ENCODE measurements at regions of chr20 and their contacts with region 1.

Region 1: GRCh38 chr20:60869087-60869486 is 383.0 kb upstream of the CDH4 start:
- DNase-seq: no peak
- H3K4me3 ChIP-seq: no peak overlapping the region
- H3K27ac ChIP-seq: no peak overlapping the region
- H3K4me1 ChIP-seq: no peaks in the 10 kb centered on the region
- H3K27me3 ChIP-seq: no peaks in the 10 kb centered on the region
- CTCF ChIP-seq: no peak
- EP300 ChIP-seq: no peak
- POLR2A ChIP-seq: no peak

Region 2: GRCh38 chr20:59735917-59736316 is 1133.2 kb before region 1 on chr20:
- in situ Hi-C with region 1: no loop called
- intact Hi-C with region 1: no loop called
- DNase-seq: no peak
- H3K4me3 ChIP-seq: no peak overlapping the region
- H3K27ac ChIP-seq: no peak overlapping the region
- H3K4me1 ChIP-seq: no peaks in the 10 kb centered on the region
- H3K27me3 ChIP-seq: no peaks in the 10 kb centered on the region
- CTCF ChIP-seq: no peak
- EP300 ChIP-seq: no peak
- POLR2A ChIP-seq: no peak

Region 3: DNA sequence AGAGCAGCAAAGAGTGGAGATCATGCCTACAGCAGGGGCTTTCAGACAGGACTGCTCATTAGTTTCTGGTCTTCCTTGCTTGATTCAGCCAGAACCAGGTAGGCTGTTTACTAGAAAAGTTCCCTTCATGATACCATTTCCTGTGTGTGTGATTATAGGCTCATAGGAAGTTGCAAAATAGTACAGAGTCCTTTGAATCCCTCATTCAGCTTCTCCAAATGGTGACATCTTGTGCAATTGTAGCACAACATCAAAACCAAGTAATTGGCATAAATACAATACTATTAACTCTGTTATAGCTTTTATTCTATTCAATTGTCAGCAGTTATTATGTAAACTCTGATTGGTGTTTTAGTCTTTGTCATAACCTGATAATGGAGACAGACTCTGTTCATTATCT is 35.6 kb after region 1 on chr20:
- in situ Hi-C with region 1: no loop called
- intact Hi-C with region 1: loop called (anchors 1 kb)
- DNase-seq: no peak
- H3K4me3 ChIP-seq: no peak overlapping the region
- H3K27ac ChIP-seq: no peak overlapping the region
- H3K4me1 ChIP-seq: no peaks in the 10 kb centered on the region
- H3K27me3 ChIP-seq: no peaks in the 10 kb centered on the region
- CTCF ChIP-seq: no peak
- EP300 ChIP-seq: no peak
- POLR2A ChIP-seq: no peak

Region 4: DNA sequence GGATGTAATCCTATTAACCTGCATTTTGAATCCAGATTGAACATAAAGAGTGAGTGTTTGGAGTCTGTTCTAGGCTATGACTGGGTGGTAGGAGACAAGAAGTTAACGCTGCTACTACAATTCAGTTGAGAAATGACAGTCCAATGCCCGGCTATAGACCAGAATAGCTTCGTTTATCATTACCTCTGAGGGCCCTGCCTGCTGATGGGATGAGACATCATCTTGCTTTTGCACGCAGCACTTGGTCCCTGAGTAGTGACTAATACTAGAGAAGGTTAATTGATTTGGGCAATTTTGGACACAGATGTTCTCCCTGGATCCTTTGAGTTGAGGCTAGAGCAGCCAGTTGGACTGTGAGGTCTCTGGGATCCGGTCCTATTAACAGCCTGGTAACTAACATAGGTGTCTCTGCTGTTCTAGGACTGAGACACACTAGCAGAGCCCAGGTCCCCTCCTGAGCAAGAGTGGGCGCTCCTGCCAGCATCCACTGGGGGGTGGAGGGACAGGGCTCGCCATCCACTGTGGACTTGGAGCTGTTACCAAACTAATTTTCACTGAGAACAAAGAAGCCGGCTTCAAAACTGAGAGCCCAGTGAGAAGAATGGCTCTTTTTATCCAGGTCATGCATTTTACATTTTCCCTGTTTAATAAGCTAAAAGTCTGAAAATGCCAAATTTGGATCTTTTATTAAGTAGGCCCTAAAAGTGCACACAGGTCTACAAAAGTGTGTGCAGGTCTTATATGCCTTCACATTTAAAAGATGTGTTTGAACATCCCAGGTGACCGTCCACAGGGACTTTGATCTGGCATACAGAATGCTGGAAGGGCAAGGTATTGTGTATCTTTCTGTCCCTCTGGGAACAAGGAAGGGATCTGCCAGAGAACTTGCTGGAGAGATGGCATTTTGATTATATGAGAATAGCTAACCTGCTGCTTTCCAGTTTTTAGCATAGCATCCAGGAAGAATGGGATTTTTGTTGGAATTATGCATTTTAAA is 595.5 kb after region 1 on chr20:
- in situ Hi-C with region 1: no loop called
- intact Hi-C with region 1: no loop called
- DNase-seq: no peak
- H3K4me3 ChIP-seq: no peak overlapping the region
- H3K27ac ChIP-seq: no peak overlapping the region
- H3K4me1 ChIP-seq: no peaks in the 10 kb centered on the region
- H3K27me3 ChIP-seq: no peaks in the 10 kb centered on the region
- CTCF ChIP-seq: no peak
- EP300 ChIP-seq: no peak
- POLR2A ChIP-seq: no peak